Activated T-helper 1 cell treated with anti-CD3 and anti-CD28 coated beads, Interleukin-12 subunit alpha, Interleukin-12 subunit beta, Interleukin-2, Interleukin-4 antibody, amounts not matched to agents 30 ng/mL and 10 ng/mL and 1 ng/mL, durations not matched to agents 14 hours and 24 hours and 36 hours (primary cell): ENCODE measurements at regions of chr15 and their contacts with region 1.

Region 1: GRCh38 chr15:95284933-95285421 is 1045.5 kb upstream of the NR2F2 start:
- DNase-seq: peak; percentile 53
- H3K4me3 Mint-ChIP-seq: peak overlapping the region; percentile 52
- H3K27ac Mint-ChIP-seq: peak overlapping the region; percentile 90
- H3K4me1 Mint-ChIP-seq: peaks cover 77% of the 10 kb centered on the region
- H3K27me3 Mint-ChIP-seq: peaks cover 15% of the 10 kb centered on the region

Region 2: GRCh38 chr15:94174399-94174802 is 1110.6 kb before region 1 on chr15:
- intact Hi-C with region 1: loop called (anchors 10 kb)
- DNase-seq: no peak
- H3K4me3 Mint-ChIP-seq: peak overlapping the region; percentile 38
- H3K27ac Mint-ChIP-seq: peak overlapping the region; percentile 85
- H3K4me1 Mint-ChIP-seq: peaks cover 58% of the 10 kb centered on the region
- H3K27me3 Mint-ChIP-seq: no peaks in the 10 kb centered on the region

Region 3: GRCh38 chr15:94596707-94597106 is 688.3 kb before region 1 on chr15:
- intact Hi-C with region 1: no loop called
- DNase-seq: no peak
- H3K4me3 Mint-ChIP-seq: no peak overlapping the region
- H3K27ac Mint-ChIP-seq: no peak overlapping the region
- H3K4me1 Mint-ChIP-seq: peaks cover 5% of the 10 kb centered on the region
- H3K27me3 Mint-ChIP-seq: peaks cover 76% of the 10 kb centered on the region

Region 4: DNA sequence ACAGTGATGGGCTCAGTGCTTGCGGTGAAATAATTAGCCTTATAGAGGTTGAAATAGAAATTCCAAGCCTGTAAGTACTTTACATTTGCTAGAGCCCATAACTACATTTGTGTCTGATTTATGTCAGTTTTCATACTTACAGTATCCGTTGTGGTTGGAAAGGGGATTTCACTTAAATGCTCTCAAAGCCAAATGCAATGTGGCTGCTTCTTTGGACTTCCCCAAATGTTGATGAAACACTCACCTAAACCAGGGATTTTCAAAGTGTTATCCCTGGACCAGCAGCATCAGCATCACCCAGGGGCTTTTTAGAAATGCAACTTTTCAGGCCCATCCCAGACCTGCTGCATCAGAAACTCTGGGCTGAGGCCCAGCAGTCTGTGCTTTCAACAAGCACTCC is 674.9 kb before region 1 on chr15:
- intact Hi-C with region 1: loop called (anchors 10 kb)
- DNase-seq: peak; percentile 29
- H3K4me3 Mint-ChIP-seq: peak overlapping the region; percentile 51
- H3K27ac Mint-ChIP-seq: no peak overlapping the region
- H3K4me1 Mint-ChIP-seq: peaks cover 68% of the 10 kb centered on the region
- H3K27me3 Mint-ChIP-seq: peaks cover 40% of the 10 kb centered on the region

Region 5: DNA sequence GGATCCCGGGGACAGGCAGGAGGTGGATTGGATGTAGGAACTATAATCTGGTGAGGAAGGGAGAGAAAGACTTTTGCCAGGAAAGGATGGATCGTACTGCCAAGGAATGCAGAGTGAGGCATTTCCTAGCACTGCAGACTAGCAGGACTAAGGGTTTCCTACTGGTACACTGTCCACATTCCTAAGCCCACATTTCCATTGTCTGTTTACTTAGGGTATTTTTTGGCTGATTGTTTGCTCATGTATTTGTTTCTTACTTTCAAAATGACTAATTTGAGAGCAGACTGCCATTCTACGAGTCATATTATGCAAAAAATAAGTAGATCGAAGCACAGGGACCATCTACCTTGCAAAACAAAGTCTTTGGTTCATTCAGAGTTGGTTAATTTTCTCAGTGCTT is 16.0 kb after region 1 on chr15:
- intact Hi-C with region 1: loop called (anchors 1 kb)
- DNase-seq: no peak
- H3K4me3 Mint-ChIP-seq: no peak overlapping the region
- H3K27ac Mint-ChIP-seq: peak overlapping the region; percentile 74
- H3K4me1 Mint-ChIP-seq: peaks cover 47% of the 10 kb centered on the region
- H3K27me3 Mint-ChIP-seq: peaks cover 29% of the 10 kb centered on the region

Region 6: DNA sequence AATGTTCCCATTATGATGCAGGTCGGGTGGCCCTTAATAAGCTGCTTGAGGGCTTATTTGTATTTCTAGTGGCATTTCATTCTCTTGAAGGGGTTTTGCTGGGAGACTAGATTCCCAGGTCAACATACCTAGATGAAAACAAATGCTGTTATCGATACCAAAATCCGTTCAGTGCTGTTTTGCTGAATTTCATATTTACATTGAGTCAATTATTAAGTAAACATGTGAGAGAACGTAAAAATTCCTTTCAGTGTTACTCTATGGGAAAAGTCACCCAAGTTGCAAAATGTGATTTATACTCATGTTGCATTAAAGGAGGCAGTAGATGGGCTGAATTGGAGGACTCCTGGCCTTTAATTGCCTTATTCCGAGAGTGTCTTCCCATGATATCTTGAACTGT is 34.2 kb after region 1 on chr15:
- intact Hi-C with region 1: no loop called
- DNase-seq: no peak
- H3K4me3 Mint-ChIP-seq: no peak overlapping the region
- H3K27ac Mint-ChIP-seq: no peak overlapping the region
- H3K4me1 Mint-ChIP-seq: no peaks in the 10 kb centered on the region
- H3K27me3 Mint-ChIP-seq: peaks cover 8% of the 10 kb centered on the region

Region 7: GRCh38 chr15:95503640-95504227 is 218.8 kb after region 1 on chr15:
- intact Hi-C with region 1: loop called (anchors 1 kb)
- DNase-seq: peak; percentile 1
- H3K4me3 Mint-ChIP-seq: no peak overlapping the region
- H3K27ac Mint-ChIP-seq: peak overlapping the region; percentile 50
- H3K4me1 Mint-ChIP-seq: peaks cover 29% of the 10 kb centered on the region
- H3K27me3 Mint-ChIP-seq: no peaks in the 10 kb centered on the region

Region 8: GRCh38 chr15:95875121-95875688 is 590.2 kb after region 1 on chr15:
- intact Hi-C with region 1: loop called (anchors 10 kb)
- DNase-seq: no peak
- H3K4me3 Mint-ChIP-seq: no peak overlapping the region
- H3K27ac Mint-ChIP-seq: no peak overlapping the region
- H3K4me1 Mint-ChIP-seq: peaks cover 40% of the 10 kb centered on the region
- H3K27me3 Mint-ChIP-seq: peaks cover 3% of the 10 kb centered on the region

Region 9: GRCh38 chr15:96356494-96357455 is 1071.8 kb after region 1 on chr15:
- intact Hi-C with region 1: loop called (anchors 1 kb)
- DNase-seq: peak; percentile 68
- H3K4me3 Mint-ChIP-seq: peak overlapping the region; percentile 83
- H3K27ac Mint-ChIP-seq: peak overlapping the region; percentile 63
- H3K4me1 Mint-ChIP-seq: peaks cover 16% of the 10 kb centered on the region
- H3K27me3 Mint-ChIP-seq: peaks cover 56% of the 10 kb centered on the region